HCT116 (cell line): ENCODE measurements at regions of chr16 and their contacts with region 1.

Region 1: GRCh38 chr16:22321339-22322001 is 24.3 kb downstream of the POLR3E start:
- DNase-seq: peak; percentile 24
- ATAC-seq: peak; percentile 83
- H3K4me3 ChIP-seq: no peak overlapping the region
- H3K27ac ChIP-seq: no peak overlapping the region
- H3K4me1 ChIP-seq: no peaks in the 10 kb centered on the region
- H3K27me3 ChIP-seq: no peaks in the 10 kb centered on the region
- CTCF ChIP-seq: peak; percentile 83 to 98 (median 89)
- POLR2A ChIP-seq: no peak
- RAD21 ChIP-seq: peak; percentile 93

Region 2: GRCh38 chr16:21158208-21159110 is 1163.0 kb before region 1 on chr16 and contains the start of gene LDAF1:
- CTCF ChIA-PET with region 1: interaction called, 9 read pairs
- POLR2A ChIA-PET with region 1: no interaction called
- RAD21 ChIA-PET with region 1: no interaction called
- intact Hi-C with region 1: loop called (anchors 2 kb)
- DNase-seq: peak; percentile 41
- ATAC-seq: peak; percentile 93
- H3K4me3 ChIP-seq: peak within 1 kb of the TSS; percentile 62 to 74
- H3K27ac ChIP-seq: peak within 1 kb of the TSS; percentile 51
- H3K4me1 ChIP-seq: peaks cover 15 to 27% of the 10 kb centered on the region in 2 experiments
- H3K27me3 ChIP-seq: no peaks in the 10 kb centered on the region
- CTCF ChIP-seq: no peak
- POLR2A ChIP-seq: no peak
- RAD21 ChIP-seq: no peak; the same call in none of the 2 replicates
- total RNA-seq, gene LDAF1: 30.0 TPM

Region 3: GRCh38 chr16:21554795-21555585 is 766.5 kb before region 1 on chr16:
- CTCF ChIA-PET with region 1: no interaction called
- POLR2A ChIA-PET with region 1: no interaction called
- RAD21 ChIA-PET with region 1: interaction called in 1 of 2 experiments, 5 read pairs
- intact Hi-C with region 1: loop called (anchors 10 kb)
- DNase-seq: peak; percentile 53
- ATAC-seq: peak; percentile 93
- H3K4me3 ChIP-seq: peak overlapping the region in 1 of 2 experiments; percentile 19; a peak in 2 of 4 replicates
- H3K27ac ChIP-seq: no peak overlapping the region
- H3K4me1 ChIP-seq: peaks cover 0 to 17% of the 10 kb centered on the region in 2 experiments; a peak in 2 of 4 replicates
- H3K27me3 ChIP-seq: no peaks in the 10 kb centered on the region
- CTCF ChIP-seq: peak; percentile 92 to 97 (median 96)
- POLR2A ChIP-seq: no peak
- RAD21 ChIP-seq: peak; percentile 97

Region 4: DNA sequence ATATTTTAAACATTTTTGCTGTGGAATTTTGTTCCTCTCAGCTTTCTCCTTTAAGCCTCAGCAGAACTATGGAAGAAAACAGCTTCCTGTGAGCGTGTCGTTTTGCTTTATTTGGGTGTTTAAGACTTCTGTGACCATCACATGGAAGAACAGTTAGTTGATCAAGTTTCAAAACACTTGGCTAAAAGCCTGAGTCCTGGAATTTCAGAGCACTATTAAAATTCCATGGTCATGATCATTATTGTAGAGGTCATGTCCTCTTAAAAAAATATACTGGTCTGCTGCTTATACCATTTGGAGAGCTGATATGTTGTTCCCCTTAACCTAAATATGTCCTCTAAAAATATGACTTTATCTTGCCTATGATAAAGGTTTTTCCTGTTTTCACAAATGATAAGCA is 65.5 kb after region 1 on chr16:
- CTCF ChIA-PET with region 1: no interaction called
- POLR2A ChIA-PET with region 1: no interaction called
- RAD21 ChIA-PET with region 1: no interaction called
- intact Hi-C with region 1: loop called (anchors 10 kb)
- DNase-seq: no peak
- ATAC-seq: no peak
- H3K4me3 ChIP-seq: no peak overlapping the region
- H3K27ac ChIP-seq: no peak overlapping the region
- H3K4me1 ChIP-seq: peaks cover 14% of the 10 kb centered on the region in 2 experiments
- H3K27me3 ChIP-seq: no peaks in the 10 kb centered on the region
- CTCF ChIP-seq: no peak
- POLR2A ChIP-seq: no peak
- RAD21 ChIP-seq: no peak

Region 5: GRCh38 chr16:22677024-22677830 is 355.8 kb after region 1 on chr16:
- CTCF ChIA-PET with region 1: no interaction called
- POLR2A ChIA-PET with region 1: no interaction called
- RAD21 ChIA-PET with region 1: no interaction called
- intact Hi-C with region 1: loop called (anchors 5 kb)
- DNase-seq: no peak
- ATAC-seq: no peak
- H3K4me3 ChIP-seq: no peak overlapping the region
- H3K27ac ChIP-seq: no peak overlapping the region
- H3K4me1 ChIP-seq: no peaks in the 10 kb centered on the region
- H3K27me3 ChIP-seq: peaks cover 54% of the 10 kb centered on the region
- CTCF ChIP-seq: no peak
- POLR2A ChIP-seq: no peak
- RAD21 ChIP-seq: no peak